HCT116 (cell line): ENCODE measurements at regions of chr17 and their contacts with region 1.

Region 1: DNA sequence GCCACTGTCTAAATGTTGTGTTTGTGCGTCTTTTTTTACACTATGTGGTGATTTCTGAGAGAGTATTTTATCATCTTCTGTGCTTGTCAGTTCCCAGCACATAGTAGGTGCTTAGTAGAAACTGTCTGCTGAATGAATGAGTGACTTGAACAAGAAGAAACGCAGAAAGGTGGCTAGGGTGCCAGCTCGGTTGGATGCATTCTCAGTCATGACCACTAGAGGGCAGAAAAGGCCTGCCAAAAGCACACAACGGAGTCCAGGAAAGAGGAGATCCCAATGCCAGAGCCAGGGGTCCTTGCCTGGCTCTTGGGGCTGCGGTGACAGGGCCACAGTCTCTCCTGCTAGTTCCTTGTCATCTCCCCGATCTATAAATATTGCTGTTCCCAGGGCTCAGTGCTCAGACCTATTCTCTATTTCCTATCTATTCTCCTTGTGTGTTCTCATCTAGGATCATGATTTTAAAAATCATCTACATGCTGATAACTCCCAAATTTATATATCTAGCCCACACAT is 57.3 kb upstream of the CCL1 start:
- DNase-seq: peak; percentile 40
- ATAC-seq: peak; percentile 84
- H3K4me3 ChIP-seq: no peak overlapping the region
- H3K27ac ChIP-seq: no peak overlapping the region
- H3K4me1 ChIP-seq: no peaks in the 10 kb centered on the region
- H3K27me3 ChIP-seq: peaks cover 42% of the 10 kb centered on the region
- CTCF ChIP-seq: peak; percentile 55 to 94 (median 84); a peak in 5 of 6 replicates
- POLR2A ChIP-seq: no peak
- RAD21 ChIP-seq: peak; percentile 80

Region 2: DNA sequence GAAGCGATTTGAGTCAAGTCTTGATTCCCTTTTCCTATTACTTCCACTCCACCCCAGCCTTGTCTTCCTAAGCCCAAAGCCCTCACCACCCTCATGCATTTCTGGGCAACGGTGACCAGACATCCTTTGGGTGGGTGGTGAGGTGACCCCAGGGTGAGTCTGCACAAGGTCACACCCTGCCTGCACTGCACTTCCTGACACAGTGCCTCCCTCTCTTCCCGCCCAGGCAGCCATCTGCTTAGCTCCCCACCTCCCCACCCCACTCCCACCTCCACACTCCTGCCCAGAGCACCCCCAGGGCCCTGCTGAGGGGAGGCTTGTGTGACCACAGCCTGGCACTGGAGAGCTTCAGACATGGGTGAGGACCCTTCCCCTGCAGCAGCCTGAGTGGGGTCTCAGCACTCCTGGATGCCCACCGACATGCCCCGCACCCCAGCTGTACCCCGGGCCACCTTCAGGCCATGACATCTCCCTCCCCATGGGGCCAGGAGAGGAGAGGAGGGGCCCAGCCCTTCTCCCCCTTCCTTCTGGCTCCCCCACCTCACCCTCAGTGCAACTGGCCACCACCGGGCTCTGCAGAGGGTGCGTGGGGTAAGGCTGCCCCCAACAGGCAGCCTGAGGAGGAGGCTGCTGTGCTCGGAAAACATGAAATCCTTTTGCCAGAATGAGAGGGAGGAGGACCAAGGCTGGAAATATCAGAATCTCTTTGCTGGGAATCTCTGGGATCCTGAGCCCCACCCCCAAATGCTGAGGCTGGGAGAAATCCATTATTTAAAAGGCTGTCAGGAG is 472.3 kb after region 1 on chr17:
- CTCF ChIA-PET with region 1: interaction called, 5 read pairs
- POLR2A ChIA-PET with region 1: no interaction called
- RAD21 ChIA-PET with region 1: no interaction called
- intact Hi-C with region 1: loop called (anchors 2 kb)
- DNase-seq: peak; percentile 3
- ATAC-seq: peak; percentile 87
- H3K4me3 ChIP-seq: no peak overlapping the region
- H3K27ac ChIP-seq: no peak overlapping the region
- H3K4me1 ChIP-seq: no peaks in the 10 kb centered on the region
- H3K27me3 ChIP-seq: peaks cover 44% of the 10 kb centered on the region
- CTCF ChIP-seq: peak; percentile 49 to 78 (median 75); a peak in 5 of 6 replicates
- POLR2A ChIP-seq: no peak
- RAD21 ChIP-seq: peak; percentile 69

Region 3: DNA sequence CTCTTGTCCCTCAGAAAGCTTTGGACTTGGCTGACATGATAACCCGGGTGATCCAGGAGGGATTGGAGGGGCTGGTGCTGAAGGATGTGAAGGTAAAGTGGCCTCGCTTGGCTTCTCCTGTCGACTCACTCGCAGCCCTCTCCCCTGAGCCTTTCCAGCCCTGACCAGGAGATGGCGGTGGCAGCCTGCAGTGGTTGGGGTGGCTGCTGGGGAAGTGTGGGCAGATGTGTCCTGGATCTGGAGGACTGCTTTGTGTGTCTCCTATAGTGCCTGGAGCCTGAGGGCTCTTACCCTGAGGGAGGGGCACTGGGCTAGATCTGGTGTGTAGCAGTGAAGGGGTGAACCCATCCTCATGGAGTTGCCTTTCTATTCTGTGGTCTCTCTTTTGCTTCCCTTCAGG is 577.9 kb after region 1 on chr17:
- CTCF ChIA-PET with region 1: no interaction called
- POLR2A ChIA-PET with region 1: no interaction called
- RAD21 ChIA-PET with region 1: no interaction called
- intact Hi-C with region 1: loop called (anchors 10 kb)
- DNase-seq: peak; percentile 38
- ATAC-seq: peak; percentile 97
- H3K4me3 ChIP-seq: no peak overlapping the region
- H3K27ac ChIP-seq: no peak overlapping the region
- H3K4me1 ChIP-seq: no peaks in the 10 kb centered on the region
- H3K27me3 ChIP-seq: no peaks in the 10 kb centered on the region
- CTCF ChIP-seq: peak; percentile 84 to 93 (median 87)
- POLR2A ChIP-seq: no peak
- RAD21 ChIP-seq: peak; percentile 95

Region 4: GRCh38 chr17:35529866-35530265 is 1109.6 kb after region 1 on chr17:
- CTCF ChIA-PET with region 1: no interaction called
- POLR2A ChIA-PET with region 1: no interaction called
- RAD21 ChIA-PET with region 1: no interaction called
- intact Hi-C with region 1: loop called (anchors 5 kb)
- DNase-seq: no peak
- ATAC-seq: no peak
- H3K4me3 ChIP-seq: no peak overlapping the region
- H3K27ac ChIP-seq: no peak overlapping the region
- H3K4me1 ChIP-seq: no peaks in the 10 kb centered on the region
- H3K27me3 ChIP-seq: no peaks in the 10 kb centered on the region
- CTCF ChIP-seq: no peak
- POLR2A ChIP-seq: no peak
- RAD21 ChIP-seq: no peak